ENCODE measurements at regions of chr20 and their contacts with region 1.

Region 1: GRCh38 chr20:38472513-38473372 is at the start of gene RALGAPB:
- DNase-seq: peak; percentile 98
- ATAC-seq: peak; percentile 94
- H3K4me3 Mint-ChIP-seq: peak within 1 kb of the TSS; percentile 83
- H3K27ac Mint-ChIP-seq: peak within 1 kb of the TSS; percentile 76
- H3K4me1 Mint-ChIP-seq: peaks cover 39% of the 10 kb centered on the region
- H3K27me3 Mint-ChIP-seq: peaks cover 6% of the 10 kb centered on the region
- total RNA-seq, gene RALGAPB: 31.9 to 32.2 TPM

Region 2: GRCh38 chr20:38434743-38435554 is 37.8 kb before region 1 on chr20 and contains the start of gene SNHG17:
- CTCF ChIA-PET with region 1: interaction called, 22 read pairs
- DNase-seq: peak; percentile 92
- ATAC-seq: peak; percentile 87
- H3K4me3 Mint-ChIP-seq: peak within 1 kb of the TSS; percentile 97
- H3K27ac Mint-ChIP-seq: peak within 1 kb of the TSS; percentile 91
- H3K4me1 Mint-ChIP-seq: peaks cover 42% of the 10 kb centered on the region
- H3K27me3 Mint-ChIP-seq: peaks cover 11% of the 10 kb centered on the region
- total RNA-seq, gene SNHG17: 92.3 to 123 TPM

Measured in activated CD8-positive, alpha-beta memory T cell treated with anti-CD3 and anti-CD28 coated beads, Interleukin-2, amount 10 ng/mL, durations not matched to agents 7 days and 5 days (primary cell).